Esophagus squamous epithelium (tissue), 5 donors: ENCODE measurements at regions of chr14 and their contacts with region 1.

Region 1: DNA sequence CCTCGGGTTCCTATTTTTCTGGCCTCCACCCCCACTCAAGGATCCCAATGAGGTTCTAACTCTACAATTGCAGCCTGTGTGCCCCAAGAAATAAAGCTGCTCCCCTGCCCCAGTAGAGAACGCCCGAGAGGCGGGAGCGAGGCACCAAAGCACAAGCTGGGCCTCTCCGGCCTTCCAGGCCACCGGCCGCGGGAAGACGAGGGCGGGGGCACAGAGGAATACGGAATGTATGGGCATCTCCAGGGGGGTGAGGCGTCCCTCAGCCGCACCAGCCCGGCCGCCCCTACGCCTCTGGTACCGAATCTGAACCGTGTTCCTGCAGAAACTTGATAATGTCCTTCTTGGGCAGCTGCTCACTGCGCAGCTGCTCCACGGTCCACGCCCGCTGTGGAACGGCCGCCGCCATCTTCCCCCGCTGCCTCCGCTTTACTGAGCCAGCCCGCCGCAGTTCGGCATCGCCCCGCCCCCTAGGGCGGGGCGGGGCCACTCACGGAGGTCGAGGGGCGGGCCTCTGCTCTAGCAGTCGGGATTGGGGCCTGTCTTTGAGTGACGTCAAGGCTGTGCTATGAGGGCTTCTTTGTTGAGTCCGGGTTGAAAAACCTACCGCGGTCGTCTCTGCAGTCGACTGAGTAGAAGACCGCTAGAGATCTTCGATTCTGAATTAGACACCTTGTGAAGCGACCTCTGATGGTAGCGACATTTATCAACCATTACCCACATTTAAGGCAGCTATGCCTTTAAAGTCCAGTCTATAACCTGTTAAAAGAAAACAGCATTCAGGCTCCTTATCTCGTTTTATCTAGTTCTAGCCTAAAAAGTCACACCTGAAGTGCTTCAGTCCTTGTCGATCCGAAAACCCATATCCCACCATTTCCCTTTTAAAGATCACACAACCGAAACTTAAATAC is at the start of gene FKBP3:
- DNase-seq: peak; percentile 93
- H3K4me3 ChIP-seq: peak within 1 kb of the TSS; percentile 58 to 96 (median 81)
- H3K27ac ChIP-seq: peak within 1 kb of the TSS; percentile 82 to 94 (median 93)
- H3K4me1 ChIP-seq: peaks cover 0 to 47% (median 24%) of the 10 kb centered on the region in 3 donors
- H3K27me3 ChIP-seq: no peaks in the 10 kb centered on the region
- CTCF ChIP-seq: peak in 1 of 6 experiments; percentile 10
- POLR2A ChIP-seq: peak in 2 of 4 donors; percentile 64 to 66
- total RNA-seq, gene FKBP3: 28.8 to 44.9 (median 37.9) TPM

Region 2: GRCh38 chr14:44961604-44962333 is 172.5 kb before region 1 on chr14 and contains the starts of genes KLHL28 and TOGARAM1:
- intact Hi-C with region 1: loop called (anchors 5 kb)
- DNase-seq: peak; percentile 95
- H3K4me3 ChIP-seq: peak within 1 kb of the TSS; percentile 65 to 94 (median 84)
- H3K27ac ChIP-seq: peak within 1 kb of the TSS; percentile 89 to 95 (median 94)
- H3K4me1 ChIP-seq: peaks cover 0 to 82% (median 48%) of the 10 kb centered on the region in 3 donors
- H3K27me3 ChIP-seq: no peaks in the 10 kb centered on the region
- CTCF ChIP-seq: no peak
- POLR2A ChIP-seq: peak in 3 of 4 donors; percentile 67 to 91 (median 79)
- total RNA-seq, gene KLHL28: 7.2 to 10.3 (median 8.4) TPM
- total RNA-seq, gene TOGARAM1: 5.8 to 23.7 (median 8.9) TPM

Region 3: GRCh38 chr14:45003924-45004323 is 130.4 kb before region 1 on chr14:
- intact Hi-C with region 1: no loop called
- DNase-seq: no peak
- H3K4me3 ChIP-seq: no peak overlapping the region
- H3K27ac ChIP-seq: no peak overlapping the region
- H3K4me1 ChIP-seq: no peaks in the 10 kb centered on the region
- H3K27me3 ChIP-seq: no peaks in the 10 kb centered on the region
- CTCF ChIP-seq: no peak
- POLR2A ChIP-seq: no peak

Region 4: DNA sequence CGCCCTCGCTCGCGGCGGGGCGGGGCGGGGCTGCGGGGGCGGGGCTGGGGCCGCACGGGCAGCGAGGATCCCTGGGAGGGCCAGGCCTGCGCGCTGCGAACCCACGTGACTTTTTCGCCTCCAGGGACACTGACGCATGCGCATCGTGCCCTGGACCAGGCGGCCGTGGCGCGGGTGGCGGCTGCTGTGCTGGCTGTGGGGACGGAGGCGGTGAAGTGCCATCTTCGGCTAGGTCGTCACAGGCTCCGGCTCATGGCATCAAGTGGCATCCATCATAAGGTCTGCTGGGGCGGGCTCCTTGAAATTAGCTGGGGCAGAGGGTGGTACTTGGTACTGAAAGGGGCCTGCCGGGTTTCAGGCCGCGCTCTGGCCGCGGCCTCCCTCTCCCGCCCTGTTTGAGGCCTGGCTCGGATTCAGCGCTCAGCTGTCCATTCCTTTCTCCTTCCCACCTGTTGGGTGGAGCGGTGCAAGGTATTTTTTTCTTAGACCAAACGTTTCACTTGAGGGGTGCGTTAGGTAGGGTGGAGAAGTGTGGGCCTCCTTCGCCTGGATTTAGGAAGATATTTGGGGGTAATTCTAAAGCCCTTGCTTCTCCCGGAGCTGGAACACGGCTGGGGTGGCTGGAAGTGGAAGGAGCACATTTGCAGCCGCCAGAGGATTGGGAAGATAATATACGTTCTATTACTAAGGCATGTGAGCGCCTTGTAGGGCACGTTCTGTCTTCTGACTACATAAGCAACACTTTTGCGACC is 50.2 kb before region 1 on chr14 and contains the start of gene PRPF39:
- intact Hi-C with region 1: loop called (anchors 2 kb)
- DNase-seq: peak; percentile 52
- H3K4me3 ChIP-seq: peak within 1 kb of the TSS; percentile 58 to 91 (median 76)
- H3K27ac ChIP-seq: peak within 1 kb of the TSS; percentile 82 to 92 (median 92)
- H3K4me1 ChIP-seq: peaks cover 8 to 56% (median 41%) of the 10 kb centered on the region in 3 donors
- H3K27me3 ChIP-seq: no peaks in the 10 kb centered on the region
- CTCF ChIP-seq: peak in 1 of 6 experiments; percentile 6
- POLR2A ChIP-seq: peak in 3 of 4 donors; percentile 59 to 88 (median 64)
- total RNA-seq, gene PRPF39: 6.9 to 39.9 (median 19.2) TPM

Region 5: GRCh38 chr14:45212231-45212630 is 77.9 kb after region 1 on chr14:
- intact Hi-C with region 1: no loop called
- DNase-seq: no peak
- H3K4me3 ChIP-seq: no peak overlapping the region
- H3K27ac ChIP-seq: no peak overlapping the region
- H3K4me1 ChIP-seq: no peaks in the 10 kb centered on the region
- H3K27me3 ChIP-seq: no peaks in the 10 kb centered on the region
- CTCF ChIP-seq: no peak
- POLR2A ChIP-seq: no peak

Region 6: DNA sequence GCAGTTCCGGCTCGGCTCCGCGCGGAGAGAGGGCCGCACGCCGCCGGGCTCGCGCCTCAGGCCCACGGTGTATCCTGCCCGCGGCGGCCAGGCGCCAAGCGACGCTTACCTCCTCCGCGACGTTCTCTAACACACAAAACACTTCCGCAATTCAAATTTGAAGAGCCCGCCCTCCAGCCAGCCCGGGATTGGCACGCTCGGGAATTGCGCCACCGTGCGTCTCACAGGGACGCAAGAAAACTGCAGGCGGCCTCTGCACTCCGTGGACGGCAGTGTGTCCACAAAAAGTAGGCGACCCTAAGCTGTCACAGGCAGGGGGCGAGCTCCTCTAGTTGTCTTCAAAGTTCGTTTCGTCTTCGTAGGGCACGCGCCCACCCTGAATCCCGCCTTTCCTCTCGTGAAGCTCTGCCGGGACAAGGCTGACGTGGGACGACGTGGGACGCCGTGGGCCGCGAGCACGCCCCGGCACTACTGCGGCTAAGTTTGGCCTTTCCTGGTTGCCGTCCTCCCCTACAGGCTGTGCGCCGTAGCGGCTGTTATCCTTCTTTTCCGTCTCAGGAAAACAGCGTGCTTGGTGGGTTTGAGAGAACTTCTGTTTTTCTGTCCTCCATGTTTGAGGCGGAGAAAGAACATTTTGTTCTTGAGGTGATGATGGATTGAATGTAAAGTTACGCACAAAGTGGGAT is 118.9 kb after region 1 on chr14 and contains the start of gene MIS18BP1:
- intact Hi-C with region 1: loop called (anchors 10 kb)
- DNase-seq: peak; percentile 77
- H3K4me3 ChIP-seq: peak within 1 kb of the TSS; percentile 64 to 87 (median 86)
- H3K27ac ChIP-seq: peak within 1 kb of the TSS; percentile 88 to 94 (median 94)
- H3K4me1 ChIP-seq: peaks cover 16 to 51% (median 24%) of the 10 kb centered on the region in 3 donors
- H3K27me3 ChIP-seq: no peaks in the 10 kb centered on the region
- CTCF ChIP-seq: peak; percentile 70 to 84 (median 78)
- POLR2A ChIP-seq: peak in 2 of 4 donors; percentile 73 to 81
- total RNA-seq, gene MIS18BP1: 16.2 to 30.7 (median 24.2) TPM